GM12878 (cell line): ENCODE measurements at regions of chr5 and their contacts with region 1.

Region 1: GRCh38 chr5:139273572-139274289 is 19.8 kb upstream of the MATR3 start:
- DNase-seq: peak; percentile 61
- ATAC-seq: peak; percentile 87
- H3K4me3 ChIP-seq: peak overlapping the region; percentile 82
- H3K27ac ChIP-seq: peak overlapping the region; percentile 90
- H3K4me1 ChIP-seq: peaks cover 38% of the 10 kb centered on the region
- H3K27me3 ChIP-seq: no peaks in the 10 kb centered on the region
- CTCF ChIP-seq: peak in 2 of 3 experiments; percentile 25 to 37; a peak in 2 of 6 replicates
- EP300 ChIP-seq: peak in 1 of 2 experiments; percentile 57; a peak in 2 of 4 replicates
- POLR2A ChIP-seq: peak; percentile 95
- RAD21 ChIP-seq: 0 out of 2 replicates have a peak, but pooled peaks have one; percentile 18

Region 2: GRCh38 chr5:139262742-139263445 is 10.8 kb before region 1 on chr5:
- CTCF ChIA-PET with region 1: interaction called, 14 read pairs
- POLR2A ChIA-PET with region 1: interaction called, 10 read pairs
- RAD21 ChIA-PET with region 1: interaction called, 5 read pairs
- SMC1A ChIA-PET with region 1: interaction called, 6 read pairs
- in situ Hi-C with region 1: no loop called
- intact Hi-C with region 1: no loop called
- DNase-seq: peak; percentile 40
- ATAC-seq: peak; percentile 99
- H3K4me3 ChIP-seq: no peak overlapping the region
- H3K27ac ChIP-seq: no peak overlapping the region
- H3K4me1 ChIP-seq: peaks cover 5% of the 10 kb centered on the region
- H3K27me3 ChIP-seq: no peaks in the 10 kb centered on the region; a peak in 1 of 4 replicates
- CTCF ChIP-seq: peak; percentile 83 to 93 (median 85)
- EP300 ChIP-seq: no peak
- POLR2A ChIP-seq: no peak
- RAD21 ChIP-seq: peak; percentile 99

Region 3: GRCh38 chr5:139293504-139294373 is 20.0 kb after region 1 on chr5 and contains the start of gene MATR3:
- CTCF ChIA-PET with region 1: interaction called, 16 read pairs
- POLR2A ChIA-PET with region 1: interaction called, 21 read pairs
- RAD21 ChIA-PET with region 1: interaction called, 31 read pairs
- SMC1A ChIA-PET with region 1: interaction called, 136 read pairs
- in situ Hi-C with region 1: no loop called
- intact Hi-C with region 1: loop called (anchors 2 kb)
- DNase-seq: peak; percentile 74
- ATAC-seq: peak; percentile 84
- H3K4me3 ChIP-seq: peak within 1 kb of the TSS; percentile 89
- H3K27ac ChIP-seq: peak within 1 kb of the TSS; percentile 98
- H3K4me1 ChIP-seq: peaks cover 11% of the 10 kb centered on the region
- H3K27me3 ChIP-seq: no peaks in the 10 kb centered on the region
- CTCF ChIP-seq: no peak
- EP300 ChIP-seq: peak in 1 of 2 experiments; percentile 48; a peak in 1 of 4 replicates
- POLR2A ChIP-seq: peak; percentile 98
- RAD21 ChIP-seq: no peak
- polyA plus RNA-seq, gene MATR3: 149 to 187 TPM

Region 4: DNA sequence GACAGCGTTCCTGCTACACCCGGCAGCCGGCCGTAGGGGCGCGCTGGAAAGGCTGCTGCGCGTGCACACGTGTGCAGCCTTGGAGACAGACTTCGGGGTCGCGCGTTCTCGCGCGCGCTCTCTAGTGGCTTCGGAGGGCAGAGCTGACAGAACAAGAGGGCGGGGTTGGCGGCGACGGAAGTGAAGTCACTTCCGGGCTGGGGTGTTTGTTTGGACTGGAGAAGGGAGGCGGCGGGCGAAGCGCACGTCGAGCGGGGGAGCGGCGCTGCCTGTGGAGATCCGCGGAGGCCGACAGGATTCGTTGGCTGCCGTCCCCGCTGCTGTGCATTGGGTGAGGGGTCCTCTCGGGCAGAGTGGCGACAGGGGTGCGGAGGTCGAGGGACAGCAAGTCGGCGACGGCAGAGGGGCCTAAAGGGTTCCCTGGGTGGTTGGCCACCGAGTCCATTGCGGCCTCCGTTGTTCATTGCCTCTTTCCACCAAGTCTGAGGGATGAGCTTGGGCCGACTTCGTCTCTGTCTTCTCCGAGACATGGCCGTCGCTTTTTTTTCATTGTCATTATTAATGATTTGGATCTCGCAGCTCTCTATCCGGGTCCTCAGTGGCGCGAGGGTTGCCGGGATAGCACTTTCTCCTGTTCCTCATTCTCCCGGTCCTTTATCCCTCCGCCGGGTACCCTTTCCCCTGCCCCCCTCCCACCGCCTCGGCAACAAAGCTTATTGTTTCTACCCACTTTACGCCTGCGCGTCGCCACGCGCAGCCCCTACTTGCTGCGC is 68.1 kb after region 1 on chr5 and contains the start of gene PAIP2:
- CTCF ChIA-PET with region 1: interaction called, 6 read pairs
- POLR2A ChIA-PET with region 1: interaction called, 8 read pairs
- RAD21 ChIA-PET with region 1: interaction called, 15 read pairs
- SMC1A ChIA-PET with region 1: interaction called, 6 read pairs
- in situ Hi-C with region 1: no loop called
- intact Hi-C with region 1: no loop called
- DNase-seq: peak; percentile 90
- ATAC-seq: peak; percentile 89
- H3K4me3 ChIP-seq: peak within 1 kb of the TSS; percentile 93
- H3K27ac ChIP-seq: peak within 1 kb of the TSS; percentile 92
- H3K4me1 ChIP-seq: peaks cover 11% of the 10 kb centered on the region
- H3K27me3 ChIP-seq: no peaks in the 10 kb centered on the region
- CTCF ChIP-seq: peak; percentile 90 to 96 (median 90)
- EP300 ChIP-seq: peak in 1 of 2 experiments; percentile 30; a peak in 1 of 4 replicates
- POLR2A ChIP-seq: peak; percentile 97
- RAD21 ChIP-seq: peak; percentile 58
- polyA plus RNA-seq, gene PAIP2: 100 to 113 TPM

Region 5: GRCh38 chr5:139392678-139393496 is 119.2 kb after region 1 on chr5:
- CTCF ChIA-PET with region 1: interaction called, 12 read pairs
- POLR2A ChIA-PET with region 1: interaction called, 13 read pairs
- RAD21 ChIA-PET with region 1: interaction called, 20 read pairs
- SMC1A ChIA-PET with region 1: interaction called, 12 read pairs
- in situ Hi-C with region 1: no loop called
- intact Hi-C with region 1: loop called (anchors 5 kb)
- DNase-seq: no peak
- ATAC-seq: peak; percentile 69
- H3K4me3 ChIP-seq: peak overlapping the region; percentile 87
- H3K27ac ChIP-seq: peak overlapping the region; percentile 90
- H3K4me1 ChIP-seq: peaks cover 49% of the 10 kb centered on the region
- H3K27me3 ChIP-seq: no peaks in the 10 kb centered on the region
- CTCF ChIP-seq: peak; percentile 89 to 98 (median 90)
- EP300 ChIP-seq: no peak
- POLR2A ChIP-seq: no peak
- RAD21 ChIP-seq: peak; percentile 76

Region 6: GRCh38 chr5:139552893-139553575 is 279.3 kb after region 1 on chr5:
- CTCF ChIA-PET with region 1: no interaction called
- POLR2A ChIA-PET with region 1: no interaction called
- RAD21 ChIA-PET with region 1: no interaction called
- SMC1A ChIA-PET with region 1: no interaction called
- in situ Hi-C with region 1: no loop called
- intact Hi-C with region 1: no loop called
- DNase-seq: no peak
- ATAC-seq: no peak; the same call in 2 of the 3 replicates
- H3K4me3 ChIP-seq: no peak overlapping the region
- H3K27ac ChIP-seq: no peak overlapping the region
- H3K4me1 ChIP-seq: no peaks in the 10 kb centered on the region
- H3K27me3 ChIP-seq: no peaks in the 10 kb centered on the region
- CTCF ChIP-seq: no peak
- EP300 ChIP-seq: no peak
- POLR2A ChIP-seq: no peak
- RAD21 ChIP-seq: no peak